Activated T-helper 1 cell treated with anti-CD3 and anti-CD28 coated beads, Interleukin-12 subunit alpha, Interleukin-12 subunit beta, Interleukin-2, Interleukin-4 antibody, amounts not matched to agents 30 ng/mL and 10 ng/mL and 1 ng/mL, durations not matched to agents 14 hours and 24 hours and 36 hours (primary cell): ENCODE measurements at regions of chr12 and their contacts with region 1.

Region 1: DNA sequence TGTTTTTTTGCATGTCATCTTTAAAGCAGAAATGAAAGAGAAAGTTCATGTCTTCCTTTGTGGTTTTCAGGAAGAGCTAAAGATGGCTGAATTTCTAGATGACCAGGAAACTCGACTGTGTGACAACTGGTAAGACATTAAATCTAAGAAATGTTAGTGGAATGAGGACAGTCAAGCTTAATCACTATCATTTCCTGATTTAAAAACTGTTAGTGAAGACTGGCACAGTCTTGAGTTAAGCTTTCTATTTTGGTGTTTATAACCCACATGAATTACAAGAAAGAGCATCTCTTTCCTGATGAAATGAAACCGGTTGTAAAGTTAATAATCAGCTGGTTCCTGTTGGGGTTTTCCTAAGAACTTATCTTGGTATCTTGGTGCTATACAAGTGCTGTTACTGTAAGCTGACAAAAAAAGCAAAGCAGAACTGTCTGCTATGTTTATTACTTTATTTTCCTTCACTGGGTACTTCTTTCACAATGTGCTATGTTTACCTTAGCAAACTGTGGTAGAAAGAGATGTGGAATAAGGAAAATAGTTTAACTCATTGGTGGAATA is 5.2 kb downstream of the TRAFD1 start:
- DNase-seq: no peak
- H3K4me3 Mint-ChIP-seq: peak overlapping the region; percentile 77
- H3K27ac Mint-ChIP-seq: peak overlapping the region; percentile 79
- H3K4me1 Mint-ChIP-seq: peaks cover 55% of the 10 kb centered on the region
- H3K27me3 Mint-ChIP-seq: no peaks in the 10 kb centered on the region

Region 2: DNA sequence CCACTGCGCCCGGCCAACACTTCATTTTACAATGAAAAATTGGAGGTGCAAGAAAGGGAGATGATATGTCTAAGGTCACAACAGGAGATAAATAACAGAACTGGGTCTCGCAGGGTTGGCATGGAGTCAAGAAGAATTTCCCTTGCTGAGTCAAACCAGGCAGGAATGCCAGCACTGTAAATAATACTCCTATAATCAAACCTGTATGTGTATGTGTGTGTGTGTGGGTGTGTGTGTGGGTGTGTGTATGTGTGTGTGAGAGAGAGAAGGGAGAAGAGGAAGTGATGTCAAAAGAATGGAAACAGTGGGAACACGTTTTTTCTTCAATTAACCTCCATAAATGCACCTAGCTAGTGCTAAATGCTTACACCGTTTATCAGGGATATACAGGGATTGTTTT is 188.0 kb before region 1 on chr12:
- intact Hi-C with region 1: loop called (anchors 1 kb)
- DNase-seq: no peak
- H3K4me3 Mint-ChIP-seq: no peak overlapping the region
- H3K27ac Mint-ChIP-seq: peak overlapping the region; percentile 27
- H3K4me1 Mint-ChIP-seq: peaks cover 23% of the 10 kb centered on the region
- H3K27me3 Mint-ChIP-seq: no peaks in the 10 kb centered on the region

Region 3: DNA sequence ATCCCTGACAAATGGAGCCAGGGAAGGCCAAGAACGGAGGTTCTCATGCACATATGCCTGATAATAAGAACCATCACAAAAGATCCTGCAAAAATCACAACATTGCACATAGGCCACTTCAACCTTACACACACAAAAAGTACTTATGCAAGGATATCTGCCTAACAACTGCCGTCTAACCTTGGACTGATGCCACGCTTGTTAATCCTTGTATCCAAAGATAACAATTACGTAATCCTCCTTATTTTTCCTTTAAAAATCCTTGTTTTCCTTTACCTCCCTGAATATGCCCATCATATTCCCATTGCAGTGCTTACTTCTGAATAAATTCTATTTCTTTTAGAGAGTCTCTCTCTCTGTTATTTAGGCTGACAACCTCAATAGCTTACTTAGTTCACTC is 177.1 kb before region 1 on chr12:
- intact Hi-C with region 1: no loop called
- DNase-seq: no peak
- H3K4me3 Mint-ChIP-seq: no peak overlapping the region
- H3K27ac Mint-ChIP-seq: no peak overlapping the region
- H3K4me1 Mint-ChIP-seq: peaks cover 37% of the 10 kb centered on the region
- H3K27me3 Mint-ChIP-seq: peaks cover 2% of the 10 kb centered on the region

Region 4: GRCh38 chr12:112087055-112087850 is 43.3 kb before region 1 on chr12:
- intact Hi-C with region 1: loop called (anchors 2 kb)
- DNase-seq: no peak
- H3K4me3 Mint-ChIP-seq: no peak overlapping the region
- H3K27ac Mint-ChIP-seq: peak overlapping the region; percentile 24
- H3K4me1 Mint-ChIP-seq: peaks cover 32% of the 10 kb centered on the region
- H3K27me3 Mint-ChIP-seq: no peaks in the 10 kb centered on the region

Region 5: GRCh38 chr12:112096667-112097066 is 33.9 kb before region 1 on chr12:
- intact Hi-C with region 1: loop called (anchors 5 kb)
- DNase-seq: no peak
- H3K4me3 Mint-ChIP-seq: peak overlapping the region; percentile 38
- H3K27ac Mint-ChIP-seq: peak overlapping the region; percentile 76
- H3K4me1 Mint-ChIP-seq: peaks cover 26% of the 10 kb centered on the region
- H3K27me3 Mint-ChIP-seq: no peaks in the 10 kb centered on the region

Region 6: DNA sequence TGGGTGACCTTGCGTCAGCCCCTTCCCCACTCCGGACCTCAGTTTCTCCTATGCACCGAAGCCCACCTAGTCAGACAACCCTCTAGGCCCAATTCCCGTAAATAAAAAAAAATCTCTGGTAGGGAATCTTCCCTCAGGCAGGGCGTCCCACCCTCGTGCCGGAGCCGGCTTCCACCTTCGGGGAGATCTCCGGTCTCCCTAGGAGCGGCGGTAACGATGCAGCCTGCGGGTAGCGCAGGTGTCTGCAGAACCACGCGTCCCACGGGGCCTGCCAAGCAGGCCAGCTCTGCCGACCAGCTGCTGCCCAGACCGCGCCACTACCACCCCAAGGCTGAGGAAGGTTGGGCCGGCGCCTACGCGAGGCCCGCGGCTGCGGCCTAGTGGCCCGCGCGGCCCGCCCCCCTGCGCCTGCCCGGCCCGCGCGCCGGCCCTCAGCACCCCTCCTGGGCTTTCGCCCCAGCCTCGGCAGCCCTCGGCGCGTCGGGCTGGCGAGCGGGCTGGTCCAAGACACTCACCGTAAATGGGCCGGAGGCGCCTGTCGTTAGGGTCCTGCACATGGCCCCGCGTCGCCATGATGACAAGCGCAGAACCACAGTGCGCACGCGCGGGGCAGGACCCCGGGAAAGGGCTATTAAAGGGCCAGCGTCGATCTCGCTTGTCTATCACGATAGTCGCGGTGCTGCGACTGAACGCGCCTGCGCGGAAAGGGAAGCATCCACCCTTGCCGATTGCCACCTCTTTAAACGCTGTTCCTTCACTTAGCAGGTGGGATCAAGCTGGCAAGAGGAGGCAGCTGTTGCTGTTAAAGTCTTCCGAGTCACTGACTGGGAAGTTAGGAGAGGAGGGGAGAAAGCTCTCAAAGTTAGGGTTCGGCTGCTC is 22.1 kb before region 1 on chr12 and contains the start of gene NAA25:
- intact Hi-C with region 1: loop called (anchors 1 kb)
- DNase-seq: peak; percentile 84
- H3K4me3 Mint-ChIP-seq: peak within 1 kb of the TSS; percentile 99
- H3K27ac Mint-ChIP-seq: peak within 1 kb of the TSS; percentile 98
- H3K4me1 Mint-ChIP-seq: peaks cover 42% of the 10 kb centered on the region
- H3K27me3 Mint-ChIP-seq: no peaks in the 10 kb centered on the region
- total RNA-seq, gene NAA25: 52.2 and 58.1 TPM in 2 replicates

Region 7: DNA sequence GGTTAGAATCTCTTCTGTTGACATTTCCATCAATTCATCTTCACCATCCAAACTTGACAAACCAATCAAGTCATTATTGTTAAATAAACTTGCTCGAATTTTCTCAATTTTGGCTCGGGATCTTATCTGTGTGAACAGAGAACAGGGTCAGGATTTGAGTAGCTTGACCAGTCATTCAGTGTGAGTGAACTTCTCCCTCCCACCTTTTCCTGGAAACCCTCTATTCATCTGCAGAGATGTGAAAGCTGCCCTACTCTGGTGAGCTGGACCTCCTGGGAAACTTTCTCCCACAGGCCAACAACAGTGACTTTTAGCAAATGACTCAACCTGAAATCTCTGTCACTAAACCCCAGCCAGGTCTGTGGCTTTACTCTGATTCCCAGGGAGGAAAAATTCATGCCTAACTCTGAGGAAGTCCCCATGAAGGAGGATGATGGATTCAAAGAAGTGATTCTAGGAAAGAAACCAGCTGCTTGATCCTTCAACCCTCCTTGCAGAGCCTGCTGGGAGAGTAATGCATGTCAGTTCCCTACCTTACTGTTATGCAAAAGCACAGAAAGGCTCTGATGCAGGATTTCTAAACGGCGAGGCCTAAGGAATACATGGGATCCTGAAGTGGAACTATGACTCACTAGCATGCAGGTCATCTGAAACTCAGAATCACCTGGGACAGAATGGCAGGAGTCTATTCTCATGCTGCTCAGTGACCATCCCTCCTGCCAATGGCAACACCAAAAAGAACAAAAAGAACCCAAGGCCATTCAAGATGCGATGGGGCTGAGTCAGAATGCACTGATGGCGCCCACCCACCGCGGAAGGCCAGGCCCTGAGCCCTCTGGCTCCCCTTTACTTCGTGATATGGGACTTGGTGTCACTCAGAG is 52.9 kb after region 1 on chr12:
- intact Hi-C with region 1: loop called (anchors 2 kb)
- DNase-seq: no peak
- H3K4me3 Mint-ChIP-seq: no peak overlapping the region
- H3K27ac Mint-ChIP-seq: peak overlapping the region; percentile 23
- H3K4me1 Mint-ChIP-seq: peaks cover 13% of the 10 kb centered on the region
- H3K27me3 Mint-ChIP-seq: no peaks in the 10 kb centered on the region

Region 8: GRCh38 chr12:112409064-112409905 is 278.8 kb after region 1 on chr12 and contains the start of gene RPL6:
- intact Hi-C with region 1: loop called (anchors 1 kb)
- DNase-seq: peak; percentile 75
- H3K4me3 Mint-ChIP-seq: peak within 1 kb of the TSS; percentile 100
- H3K27ac Mint-ChIP-seq: peak within 1 kb of the TSS; percentile 100
- H3K4me1 Mint-ChIP-seq: peaks cover 33% of the 10 kb centered on the region
- H3K27me3 Mint-ChIP-seq: no peaks in the 10 kb centered on the region
- total RNA-seq, gene RPL6: 1,690 and 1,698 TPM in 2 replicates